Psoas muscle (tissue), 8 donors: ENCODE measurements at regions of chr1 and their contacts with region 1.

Region 1: DNA sequence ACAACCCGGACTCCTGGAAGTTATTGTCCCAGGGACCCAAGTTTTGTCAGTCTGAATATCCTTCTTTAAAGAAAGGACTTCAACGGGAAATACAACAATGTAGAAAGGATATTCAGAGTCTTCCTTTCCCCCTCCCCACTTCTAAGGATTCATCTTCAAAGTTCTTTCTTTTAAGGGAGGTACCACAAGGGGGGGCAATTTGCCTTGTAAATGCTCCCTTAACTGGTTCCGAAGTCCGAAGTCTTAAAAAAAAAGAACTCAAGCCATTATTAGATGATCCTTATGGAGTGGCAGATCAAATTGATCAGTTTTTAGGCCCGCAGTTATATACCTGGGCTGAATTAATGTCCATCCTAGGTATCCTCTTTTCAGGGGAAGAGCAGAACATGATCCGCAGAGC is 47.0 kb downstream of the SERINC2 start:
- DNase-seq: no peak
- ATAC-seq: no peak
- H3K4me3 ChIP-seq: no peak overlapping the region
- H3K27ac ChIP-seq: no peak overlapping the region
- H3K4me1 ChIP-seq: no peaks in the 10 kb centered on the region
- H3K27me3 ChIP-seq: peaks cover 0 to 4% (median 3%) of the 10 kb centered on the region in 3 donors
- CTCF ChIP-seq: no peak

Region 2: GRCh38 chr1:31509124-31510072 is 49.4 kb after region 1 on chr1:
- intact Hi-C with region 1: loop called in 1 of 2 experiments (anchors 10 kb)
- DNase-seq: no peak
- ATAC-seq: no peak
- H3K4me3 ChIP-seq: no peak overlapping the region
- H3K27ac ChIP-seq: no peak overlapping the region
- H3K4me1 ChIP-seq: no peaks in the 10 kb centered on the region
- H3K27me3 ChIP-seq: peaks cover 0 to 15% (median 0%) of the 10 kb centered on the region in 3 donors
- CTCF ChIP-seq: no peak

Region 3: GRCh38 chr1:31541194-31541593 is 81.2 kb after region 1 on chr1:
- intact Hi-C with region 1: loop called (anchors 5 to 10 kb)
- DNase-seq: no peak
- ATAC-seq: no peak
- H3K4me3 ChIP-seq: no peak overlapping the region
- H3K27ac ChIP-seq: no peak overlapping the region
- H3K4me1 ChIP-seq: no peaks in the 10 kb centered on the region
- H3K27me3 ChIP-seq: peaks cover 0 to 6% (median 0%) of the 10 kb centered on the region in 3 donors
- CTCF ChIP-seq: no peak